Left cardiac atrium (tissue), 4 donors: ENCODE measurements at regions of chr1 and their contacts with region 1.

Region 1: GRCh38 chr1:229156872-229157271 is 114.0 kb upstream of the RAB4A start:
- DNase-seq: no peak
- ATAC-seq: peak; percentile 53 to 72

Region 2: GRCh38 chr1:228664399-228664914 is 492.4 kb before region 1 on chr1:
- intact Hi-C with region 1: loop called in 1 of 2 experiments (anchors 10 kb)
- DNase-seq: peak; percentile 74
- ATAC-seq: peak in 1 of 2 donors; percentile 36

Region 3: DNA sequence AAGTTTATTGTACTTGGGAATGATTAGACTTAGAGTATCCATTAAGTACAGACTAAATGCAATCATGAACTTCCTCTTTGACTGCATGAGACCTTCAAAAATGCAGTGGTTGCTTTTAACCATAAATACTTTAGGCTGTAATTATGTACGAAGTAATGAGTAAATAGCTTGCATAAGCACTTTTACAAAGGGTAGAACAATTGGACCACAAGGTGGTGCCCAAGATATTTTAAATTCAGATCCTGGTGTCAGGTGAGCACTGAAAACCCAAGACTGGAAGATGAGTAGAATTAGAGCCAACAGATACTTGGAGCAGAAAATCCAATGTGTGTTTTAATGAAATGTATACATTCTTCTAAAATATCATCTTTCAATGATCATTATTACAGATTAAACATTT is 464.9 kb before region 1 on chr1:
- intact Hi-C with region 1: loop called in 1 of 2 experiments (anchors 10 kb)
- DNase-seq: no peak
- ATAC-seq: no peak

Region 4: GRCh38 chr1:228734881-228735801 is 421.7 kb before region 1 on chr1 and contains the start of gene RHOU:
- intact Hi-C with region 1: loop called (anchors 2 to 5 kb)
- DNase-seq: peak; percentile 85
- ATAC-seq: peak; percentile 92 to 94
- total RNA-seq, gene RHOU: 12.9 to 16.5 TPM

Region 5: DNA sequence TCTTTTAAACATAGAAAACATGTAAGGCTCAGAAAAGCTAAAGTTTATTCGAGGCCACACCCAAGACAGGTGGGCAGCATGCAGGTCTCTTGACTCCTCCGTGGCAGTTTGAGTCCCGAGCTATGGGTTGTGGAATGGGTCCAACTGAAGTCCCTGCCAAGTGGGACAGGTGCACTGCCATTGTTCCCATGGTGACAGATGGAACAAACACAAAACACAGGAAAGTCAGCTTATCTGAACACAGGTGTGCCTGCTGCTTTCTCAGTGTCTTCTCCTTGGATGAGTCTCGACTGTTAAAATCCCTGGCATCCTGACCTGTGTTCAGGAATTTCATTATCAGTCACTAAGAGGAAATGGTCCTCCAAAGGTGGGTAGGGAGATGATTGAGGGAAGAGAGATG is 15.1 kb after region 1 on chr1:
- intact Hi-C with region 1: no loop called
- DNase-seq: no peak
- ATAC-seq: no peak

Region 6: GRCh38 chr1:229227298-229227919 is 70.5 kb after region 1 on chr1:
- intact Hi-C with region 1: loop called in 1 of 2 experiments (anchors 10 kb)
- DNase-seq: peak; percentile 85
- ATAC-seq: peak; percentile 29 to 51